ENCODE measurements at regions of chr6 and their contacts with region 1.

Region 1: GRCh38 chr6:42901536-42901957 is 14.3 kb upstream of the PTCRA start:
- DNase-seq: peak; percentile 76
- H3K4me3 ChIP-seq: no peak overlapping the region
- H3K27ac ChIP-seq: peak overlapping the region; percentile 73
- H3K4me1 ChIP-seq: peaks cover 34% of the 10 kb centered on the region
- H3K27me3 ChIP-seq: no peaks in the 10 kb centered on the region
- CTCF ChIP-seq: peak; percentile 95

Region 2: DNA sequence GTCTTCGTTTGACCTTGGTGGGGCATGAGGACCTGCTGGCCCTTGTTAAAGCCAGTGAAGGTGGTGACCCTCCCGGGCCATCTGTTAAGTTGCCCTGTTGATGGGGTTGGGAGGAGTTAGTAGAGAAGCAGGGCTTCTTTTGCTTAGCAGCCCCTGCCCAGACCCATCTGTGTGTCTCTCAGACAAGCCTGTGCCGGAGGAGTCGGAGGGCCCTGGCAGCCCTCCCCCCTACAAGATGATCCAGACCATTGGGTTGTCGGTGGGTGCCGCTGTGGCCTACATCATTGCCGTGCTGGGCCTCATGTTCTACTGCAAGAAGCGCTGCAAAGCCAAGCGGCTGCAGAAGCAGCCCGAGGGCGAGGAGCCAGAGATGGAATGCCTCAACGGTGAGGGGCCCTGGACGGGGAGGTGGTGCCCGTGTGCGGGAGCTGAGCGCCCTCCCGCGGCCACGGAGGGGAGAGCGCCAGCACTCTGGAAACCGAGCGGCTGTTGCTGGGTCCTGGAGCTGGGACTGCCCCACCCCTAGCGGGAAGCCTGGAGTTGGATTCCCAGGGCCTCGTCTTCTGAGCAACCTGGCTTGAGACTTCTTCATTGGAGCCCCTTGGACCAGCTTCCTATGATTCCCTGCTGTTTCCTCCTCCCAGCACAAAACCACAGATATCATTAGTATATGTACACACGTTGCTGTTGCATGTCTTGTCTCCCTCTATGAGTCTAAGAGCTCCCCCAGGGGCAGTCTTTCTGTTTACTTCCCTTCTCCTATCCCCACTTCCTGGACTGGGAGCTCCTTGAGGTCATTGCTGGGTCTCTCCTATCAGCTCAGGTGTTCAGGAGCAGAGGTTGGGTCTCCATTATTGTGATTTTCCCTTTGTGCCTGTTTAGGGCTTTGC is 241.9 kb after region 1 on chr6:
- intact Hi-C with region 1: loop called (anchors 10 kb)
- DNase-seq: peak; percentile 87
- H3K4me3 ChIP-seq: no peak overlapping the region
- H3K27ac ChIP-seq: peak overlapping the region; percentile 71
- H3K4me1 ChIP-seq: peaks cover 26% of the 10 kb centered on the region
- H3K27me3 ChIP-seq: no peaks in the 10 kb centered on the region
- CTCF ChIP-seq: peak; percentile 97